ENCODE measurements at regions of chr2 and their contacts with region 1.

Region 1: GRCh38 chr2:163878531-163879117 is 142.8 kb upstream of the FIGN start:
- DNase-seq: peak; percentile 9
- H3K4me3 ChIP-seq: no peak overlapping the region
- H3K27ac ChIP-seq: no peak overlapping the region
- H3K4me1 ChIP-seq: no peaks in the 10 kb centered on the region
- H3K27me3 ChIP-seq: no peaks in the 10 kb centered on the region
- CTCF ChIP-seq: peak; percentile 88 to 89

Region 2: GRCh38 chr2:163471947-163472346 is 406.7 kb before region 1 on chr2:
- CTCF ChIA-PET with region 1: interaction called, 3 read pairs
- dilution Hi-C with region 1: no loop called
- in situ Hi-C with region 1: no loop called
- intact Hi-C with region 1: loop called (anchors 1 kb)
- DNase-seq: peak; percentile 19
- H3K4me3 ChIP-seq: no peak overlapping the region
- H3K27ac ChIP-seq: no peak overlapping the region
- H3K4me1 ChIP-seq: no peaks in the 10 kb centered on the region
- H3K27me3 ChIP-seq: no peaks in the 10 kb centered on the region
- CTCF ChIP-seq: peak; percentile 20 to 65

Region 3: DNA sequence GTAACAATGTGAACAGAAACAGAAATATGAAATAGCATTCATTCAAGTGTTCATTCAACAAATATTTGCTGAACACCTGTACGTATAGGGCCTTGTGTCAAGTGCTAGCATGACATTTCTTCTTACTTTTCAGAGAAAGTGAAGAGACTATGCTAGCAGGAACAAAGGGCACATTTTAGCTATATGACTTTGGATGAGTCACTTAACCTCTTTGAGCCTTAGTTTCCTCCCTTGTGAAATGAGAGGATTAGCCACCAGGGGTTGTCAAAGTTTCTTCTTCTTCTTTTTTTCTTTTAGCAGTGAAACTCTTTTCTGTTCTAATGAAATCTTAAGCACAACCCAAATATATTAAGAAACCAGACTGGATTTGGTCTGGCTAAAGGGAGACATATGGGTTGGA is 195.9 kb before region 1 on chr2:
- CTCF ChIA-PET with region 1: no interaction called
- dilution Hi-C with region 1: no loop called
- in situ Hi-C with region 1: no loop called
- intact Hi-C with region 1: loop called (anchors 2 kb)
- DNase-seq: peak; percentile 70
- H3K4me3 ChIP-seq: no peak overlapping the region
- H3K27ac ChIP-seq: peak overlapping the region; percentile 31
- H3K4me1 ChIP-seq: peaks cover 12% of the 10 kb centered on the region
- H3K27me3 ChIP-seq: no peaks in the 10 kb centered on the region
- CTCF ChIP-seq: peak; percentile 42 to 44

Region 4: GRCh38 chr2:163735685-163736432 is 142.8 kb before region 1 on chr2 and contains the start of gene FIGN:
- CTCF ChIA-PET with region 1: interaction called, 3 read pairs
- dilution Hi-C with region 1: no loop called
- in situ Hi-C with region 1: no loop called
- intact Hi-C with region 1: loop called (anchors 2 kb)
- DNase-seq: peak; percentile 77
- H3K4me3 ChIP-seq: peak within 1 kb of the TSS; percentile 93 to 100 (median 98)
- H3K27ac ChIP-seq: peak within 1 kb of the TSS; percentile 80
- H3K4me1 ChIP-seq: peaks cover 17% of the 10 kb centered on the region
- H3K27me3 ChIP-seq: no peaks in the 10 kb centered on the region
- CTCF ChIP-seq: no peak
- total RNA-seq, gene FIGN: 2.5 to 10.7 TPM